ENCODE measurements at regions of chr3 and their contacts with region 1.

Region 1: DNA sequence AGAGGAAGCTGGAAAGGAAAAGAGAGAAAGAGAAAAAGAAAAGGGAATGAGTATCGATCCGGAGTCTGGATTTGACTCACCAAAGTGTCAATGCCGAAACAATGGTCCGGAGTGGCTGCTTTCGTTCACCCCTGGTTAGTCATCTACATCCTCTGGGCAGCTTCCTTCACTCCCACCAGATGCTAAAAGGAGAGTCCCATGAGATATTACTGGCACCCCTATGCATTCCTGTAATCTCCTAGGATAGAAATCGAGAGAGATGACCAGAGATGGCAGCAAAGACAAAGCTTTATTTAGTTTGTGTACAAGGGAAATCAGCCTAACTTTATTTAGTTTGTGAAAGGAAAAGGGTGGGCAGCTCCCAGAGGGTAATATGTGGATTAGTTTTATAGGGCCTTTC is 622.2 kb downstream of the ZPLD1 start:
- DNase-seq: peak; percentile 35
- H3K4me3 Mint-ChIP-seq: peak overlapping the region; percentile 32
- H3K27ac Mint-ChIP-seq: peak overlapping the region; percentile 43
- H3K4me1 Mint-ChIP-seq: peaks cover 33% of the 10 kb centered on the region
- H3K27me3 Mint-ChIP-seq: no peaks in the 10 kb centered on the region
- CTCF ChIP-seq: no peak

Region 2: GRCh38 chr3:103085465-103085864 is 28.5 kb after region 1 on chr3:
- CTCF ChIA-PET with region 1: no interaction called
- intact Hi-C with region 1: loop called (anchors 2 kb)
- DNase-seq: peak; percentile 45
- H3K4me3 Mint-ChIP-seq: peak overlapping the region; percentile 20
- H3K27ac Mint-ChIP-seq: peak overlapping the region; percentile 56
- H3K4me1 Mint-ChIP-seq: peaks cover 54% of the 10 kb centered on the region
- H3K27me3 Mint-ChIP-seq: no peaks in the 10 kb centered on the region
- CTCF ChIP-seq: no peak

Region 3: DNA sequence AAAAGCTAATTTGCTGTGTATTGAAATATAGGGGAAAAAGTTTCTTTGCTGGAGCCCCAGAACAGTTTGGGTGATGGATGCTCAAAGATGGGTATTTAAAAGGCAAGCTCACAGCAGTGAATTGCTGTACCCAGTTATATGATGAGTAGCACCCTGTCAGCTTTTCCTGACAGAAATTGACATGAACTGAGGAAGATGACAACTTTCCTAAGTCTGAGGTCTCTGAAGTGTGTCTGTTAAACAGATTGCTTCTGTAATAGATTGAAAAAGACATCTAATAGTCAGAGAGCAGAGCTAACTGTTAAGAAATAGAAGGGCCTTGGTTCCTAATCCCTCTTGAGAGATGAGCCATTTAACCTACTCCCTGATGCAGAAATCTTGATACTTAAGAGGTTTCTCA is 1031.7 kb after region 1 on chr3:
- CTCF ChIA-PET with region 1: no interaction called
- intact Hi-C with region 1: no loop called
- DNase-seq: no peak
- H3K4me3 Mint-ChIP-seq: no peak overlapping the region
- H3K27ac Mint-ChIP-seq: no peak overlapping the region
- H3K4me1 Mint-ChIP-seq: no peaks in the 10 kb centered on the region
- H3K27me3 Mint-ChIP-seq: no peaks in the 10 kb centered on the region
- CTCF ChIP-seq: no peak